ENCODE measurements at regions of chr22 and their contacts with region 1.

Region 1: GRCh38 chr22:39319270-39320022 is at the start of gene RPL3:
- DNase-seq: peak; percentile 97 to 99 (median 98)
- ATAC-seq: peak; percentile 93
- H3K4me3 ChIP-seq: peak within 1 kb of the TSS; percentile 81
- H3K4me3 Mint-ChIP-seq: peak within 1 kb of the TSS; percentile 95 to 100 (median 98)
- H3K27ac ChIP-seq: peak within 1 kb of the TSS; percentile 90
- H3K27ac Mint-ChIP-seq: peak within 1 kb of the TSS; percentile 95 to 99 (median 97)
- H3K4me1 ChIP-seq: peaks cover 34 to 39% of the 10 kb centered on the region in 2 donors
- H3K4me1 Mint-ChIP-seq: peaks cover 27 to 51% (median 35%) of the 10 kb centered on the region in 7 donors
- H3K27me3 ChIP-seq: no peaks in the 10 kb centered on the region
- H3K27me3 Mint-ChIP-seq: peaks cover 0 to 3% (median 0%) of the 10 kb centered on the region in 5 donors
- total RNA-seq, gene RPL3: 1,611 to 3,932 (median 3,789) TPM

Region 2: DNA sequence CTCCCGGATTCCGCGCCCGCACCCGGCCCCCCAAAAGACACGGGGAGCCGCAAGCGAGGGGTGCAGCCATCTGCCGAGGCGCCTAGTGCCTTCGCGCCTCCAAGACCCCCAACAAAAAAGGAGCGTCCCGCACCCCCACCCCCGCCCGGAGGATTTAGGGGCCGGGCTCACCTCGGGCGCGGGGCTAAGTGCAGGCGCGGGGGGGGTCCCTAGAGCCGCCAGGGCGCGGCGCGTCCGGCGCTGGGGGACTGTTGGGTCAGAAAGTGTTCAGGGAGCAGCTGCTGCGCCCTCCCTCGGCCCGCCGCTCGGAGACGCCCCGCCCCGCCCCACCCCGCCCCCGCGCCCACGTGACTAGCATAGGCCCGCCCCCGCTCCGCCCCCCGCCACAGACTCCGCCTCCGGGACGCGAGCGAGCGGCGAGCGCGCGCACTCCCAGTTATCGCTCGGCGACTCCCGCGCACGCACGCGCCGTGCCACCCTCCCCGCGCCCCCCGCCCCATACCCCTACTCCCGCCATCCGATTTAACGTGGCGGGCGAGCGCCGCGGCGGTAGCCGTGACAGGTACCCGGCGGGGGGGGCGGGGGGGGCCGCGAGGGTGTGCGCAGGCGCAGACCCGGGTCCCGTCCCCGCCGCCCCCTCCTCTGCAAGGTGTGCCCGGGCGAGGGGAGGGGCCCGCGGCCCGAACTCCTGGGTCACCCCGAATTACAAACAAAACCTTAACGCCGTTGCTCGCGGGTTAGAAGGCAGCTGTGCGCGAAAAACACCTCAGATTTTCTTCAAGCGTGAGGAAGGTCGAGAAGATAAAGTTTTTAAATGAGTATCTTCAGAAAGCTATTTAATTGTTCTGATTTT is 920.6 kb before region 1 on chr22:
- CTCF ChIA-PET with region 1: no interaction called
- POLR2A ChIA-PET with region 1: no interaction called
- intact Hi-C with region 1: loop called in 1 of 2 experiments (anchors 5 kb)
- DNase-seq: peak; percentile 74 to 91 (median 82)
- ATAC-seq: peak; percentile 93
- H3K4me3 ChIP-seq: peak overlapping the region; percentile 46
- H3K4me3 Mint-ChIP-seq: peak overlapping the region; percentile 78 to 93 (median 85)
- H3K27ac ChIP-seq: peak overlapping the region; percentile 69
- H3K27ac Mint-ChIP-seq: peak overlapping the region in 8 of 9 donors; percentile 55 to 84 (median 76)
- H3K4me1 ChIP-seq: no peaks in the 10 kb centered on the region
- H3K4me1 Mint-ChIP-seq: peaks cover 6 to 41% (median 33%) of the 10 kb centered on the region in 7 donors
- H3K27me3 ChIP-seq: no peaks in the 10 kb centered on the region
- H3K27me3 Mint-ChIP-seq: peaks cover 0 to 30% (median 0%) of the 10 kb centered on the region in 5 donors

Region 3: GRCh38 chr22:39013942-39014722 is 305.3 kb before region 1 on chr22 and contains the start of gene APOBEC3C:
- CTCF ChIA-PET with region 1: no interaction called
- POLR2A ChIA-PET with region 1: interaction called, 4 read pairs
- intact Hi-C with region 1: loop called in 1 of 2 experiments (anchors 2 kb)
- DNase-seq: peak; percentile 28 to 78 (median 59)
- ATAC-seq: peak; percentile 95
- H3K4me3 ChIP-seq: peak within 1 kb of the TSS; percentile 81
- H3K4me3 Mint-ChIP-seq: peak within 1 kb of the TSS; percentile 88 to 99 (median 94)
- H3K27ac ChIP-seq: peak within 1 kb of the TSS; percentile 87
- H3K27ac Mint-ChIP-seq: peak within 1 kb of the TSS; percentile 82 to 98 (median 95)
- H3K4me1 ChIP-seq: peaks cover 9 to 10% of the 10 kb centered on the region in 2 donors
- H3K4me1 Mint-ChIP-seq: peaks cover 12 to 51% (median 37%) of the 10 kb centered on the region in 7 donors
- H3K27me3 ChIP-seq: no peaks in the 10 kb centered on the region
- H3K27me3 Mint-ChIP-seq: no peaks in the 10 kb centered on the region
- total RNA-seq, gene APOBEC3C: 16.4 to 102 (median 20.5) TPM

Region 4: DNA sequence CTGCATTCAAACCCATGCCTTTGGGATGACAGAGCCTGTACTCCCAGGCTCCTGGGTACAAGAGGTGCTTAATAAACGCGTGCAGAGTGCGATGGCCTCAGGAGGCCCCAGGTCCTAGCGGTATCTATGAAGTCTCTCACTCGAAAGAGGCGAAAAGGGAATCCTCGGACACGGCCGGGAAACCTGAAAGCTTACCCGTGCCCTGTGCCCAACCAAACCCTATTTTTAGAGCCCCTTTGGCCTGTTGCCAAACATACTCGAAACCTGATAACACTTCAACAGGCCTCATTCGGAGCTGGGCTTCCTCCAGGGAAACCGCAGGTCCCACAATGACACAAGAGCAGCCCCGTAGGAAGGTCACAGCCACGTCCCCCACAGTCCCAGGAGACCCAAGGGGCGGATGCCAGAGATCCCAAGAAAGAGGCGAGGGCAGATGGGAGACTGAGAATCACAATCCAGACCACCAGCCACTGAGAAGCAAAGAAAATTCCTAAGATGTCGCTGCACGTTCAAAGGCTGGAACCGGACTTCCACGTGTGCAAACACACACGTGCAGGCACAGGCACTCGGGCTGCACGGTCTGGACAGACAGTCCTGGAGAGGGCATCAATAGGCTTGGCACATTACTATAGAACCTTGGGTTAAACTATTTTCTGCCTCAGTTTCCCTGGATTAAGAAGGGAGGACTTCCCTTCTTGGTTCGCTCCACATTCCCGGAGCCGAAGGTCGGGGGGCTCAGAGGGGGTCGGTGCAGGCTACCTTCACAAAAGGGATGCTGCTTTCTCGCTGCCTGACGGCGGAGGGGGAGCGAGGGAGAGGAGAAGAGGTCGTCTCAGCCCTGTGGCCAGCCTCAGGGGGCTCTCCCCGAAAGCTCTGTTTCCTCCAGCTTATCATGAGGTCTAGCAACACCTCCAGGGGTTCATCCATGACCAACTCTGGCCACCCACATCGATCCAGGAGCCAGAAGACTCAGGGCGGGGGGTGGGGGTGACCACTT is 82.8 kb before region 1 on chr22:
- CTCF ChIA-PET with region 1: no interaction called
- POLR2A ChIA-PET with region 1: interaction called, 80 read pairs
- intact Hi-C with region 1: no loop called
- DNase-seq: peak in 7 of 9 donors; percentile 27 to 55 (median 49)
- ATAC-seq: peak; percentile 52
- H3K4me3 ChIP-seq: peak overlapping the region; percentile 14
- H3K4me3 Mint-ChIP-seq: peak overlapping the region; percentile 67 to 84 (median 79)
- H3K27ac ChIP-seq: no peak overlapping the region
- H3K27ac Mint-ChIP-seq: peak overlapping the region in 6 of 9 donors; percentile 31 to 89 (median 65)
- H3K4me1 ChIP-seq: peaks cover 54 to 66% of the 10 kb centered on the region in 2 donors
- H3K4me1 Mint-ChIP-seq: peaks cover 43 to 75% (median 67%) of the 10 kb centered on the region in 7 donors
- H3K27me3 ChIP-seq: peaks cover 0 to 8% of the 10 kb centered on the region in 2 donors
- H3K27me3 Mint-ChIP-seq: peaks cover 0 to 80% (median 38%) of the 10 kb centered on the region in 5 donors

Region 5: GRCh38 chr22:39332441-39333064 is 13.1 kb after region 1 on chr22:
- CTCF ChIA-PET with region 1: interaction called, 4 read pairs
- POLR2A ChIA-PET with region 1: interaction called, 33 read pairs
- intact Hi-C with region 1: no loop called
- DNase-seq: no peak
- ATAC-seq: no peak
- H3K4me3 ChIP-seq: no peak overlapping the region
- H3K4me3 Mint-ChIP-seq: no peak overlapping the region
- H3K27ac ChIP-seq: no peak overlapping the region
- H3K27ac Mint-ChIP-seq: no peak overlapping the region
- H3K4me1 ChIP-seq: no peaks in the 10 kb centered on the region
- H3K4me1 Mint-ChIP-seq: peaks cover 6 to 20% (median 15%) of the 10 kb centered on the region in 7 donors
- H3K27me3 ChIP-seq: no peaks in the 10 kb centered on the region
- H3K27me3 Mint-ChIP-seq: peaks cover 0 to 2% (median 0%) of the 10 kb centered on the region in 5 donors

Region 6: GRCh38 chr22:39388261-39389011 is 69.0 kb after region 1 on chr22:
- CTCF ChIA-PET with region 1: interaction called, 6 read pairs
- POLR2A ChIA-PET with region 1: interaction called, 3 read pairs
- intact Hi-C with region 1: loop called (anchors 5 kb)
- DNase-seq: peak in 8 of 9 donors; percentile 16 to 89 (median 77)
- ATAC-seq: peak; percentile 96
- H3K4me3 ChIP-seq: peak overlapping the region; percentile 56
- H3K4me3 Mint-ChIP-seq: peak overlapping the region; percentile 57 to 98 (median 90)
- H3K27ac ChIP-seq: peak overlapping the region; percentile 87
- H3K27ac Mint-ChIP-seq: peak overlapping the region in 8 of 9 donors; percentile 51 to 99 (median 94)
- H3K4me1 ChIP-seq: peaks cover 0 to 4% of the 10 kb centered on the region in 2 donors
- H3K4me1 Mint-ChIP-seq: peaks cover 6 to 31% (median 18%) of the 10 kb centered on the region in 7 donors
- H3K27me3 ChIP-seq: no peaks in the 10 kb centered on the region
- H3K27me3 Mint-ChIP-seq: peaks cover 0 to 4% (median 0%) of the 10 kb centered on the region in 5 donors

Region 7: GRCh38 chr22:39520054-39520891 is 200.8 kb after region 1 on chr22 and contains the start of gene ATF4:
- CTCF ChIA-PET with region 1: interaction called, 4 read pairs
- POLR2A ChIA-PET with region 1: interaction called, 20 read pairs
- intact Hi-C with region 1: loop called (anchors 1 kb)
- DNase-seq: peak; percentile 88 to 98 (median 96)
- ATAC-seq: peak; percentile 92
- H3K4me3 ChIP-seq: peak within 1 kb of the TSS; percentile 96
- H3K4me3 Mint-ChIP-seq: peak within 1 kb of the TSS; percentile 83 to 99 (median 96)
- H3K27ac ChIP-seq: peak within 1 kb of the TSS; percentile 84
- H3K27ac Mint-ChIP-seq: peak within 1 kb of the TSS; percentile 94 to 100 (median 97)
- H3K4me1 ChIP-seq: peaks cover 27 to 39% of the 10 kb centered on the region in 2 donors
- H3K4me1 Mint-ChIP-seq: peaks cover 29 to 61% (median 48%) of the 10 kb centered on the region in 7 donors
- H3K27me3 ChIP-seq: no peaks in the 10 kb centered on the region
- H3K27me3 Mint-ChIP-seq: peaks cover 0 to 4% (median 0%) of the 10 kb centered on the region in 5 donors
- total RNA-seq, gene ATF4: 235 to 293 (median 244) TPM